WTC11 (cell line): ENCODE measurements at regions of chr10 and their contacts with region 1.

Region 1: GRCh38 chr10:48656241-48656913 is 28.3 kb upstream of the WDFY4 start:
- DNase-seq: peak; percentile 86
- ATAC-seq: peak; percentile 77
- H3K4me3 Mint-ChIP-seq: peak overlapping the region; percentile 66
- H3K27ac Mint-ChIP-seq: no peak overlapping the region
- H3K4me1 Mint-ChIP-seq: peaks cover 16% of the 10 kb centered on the region
- H3K27me3 Mint-ChIP-seq: peaks cover 30% of the 10 kb centered on the region
- CTCF ChIP-seq: peak; percentile 90

Region 2: DNA sequence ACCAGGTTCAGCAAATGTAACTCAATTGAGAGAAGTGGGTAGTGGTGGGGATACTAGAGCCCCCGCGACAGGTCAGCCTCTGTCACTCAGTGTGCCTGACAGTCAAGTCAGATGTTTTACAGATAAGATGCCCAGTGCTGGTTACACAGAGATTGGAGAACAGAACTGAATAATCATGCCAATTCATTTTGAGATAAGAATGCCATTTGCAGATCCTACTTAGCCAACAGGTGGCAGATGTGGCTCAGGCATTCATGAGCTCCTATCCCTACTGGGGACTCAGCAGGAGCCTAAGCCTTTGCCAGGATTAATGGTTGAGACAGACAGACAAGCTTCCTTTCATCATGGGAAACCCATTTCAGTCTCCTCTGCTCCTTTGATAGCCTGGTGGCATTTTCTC is 212.1 kb before region 1 on chr10:
- CTCF ChIA-PET with region 1: interaction called, 45 read pairs
- POLR2A ChIA-PET with region 1: interaction called, 3 read pairs
- DNase-seq: no peak
- ATAC-seq: peak; percentile 65
- H3K4me3 Mint-ChIP-seq: no peak overlapping the region
- H3K27ac Mint-ChIP-seq: peak overlapping the region; percentile 39
- H3K4me1 Mint-ChIP-seq: peaks cover 20% of the 10 kb centered on the region
- H3K27me3 Mint-ChIP-seq: no peaks in the 10 kb centered on the region
- CTCF ChIP-seq: 0 out of 2 replicates have a peak, but pooled peaks have one; percentile 17

Region 3: DNA sequence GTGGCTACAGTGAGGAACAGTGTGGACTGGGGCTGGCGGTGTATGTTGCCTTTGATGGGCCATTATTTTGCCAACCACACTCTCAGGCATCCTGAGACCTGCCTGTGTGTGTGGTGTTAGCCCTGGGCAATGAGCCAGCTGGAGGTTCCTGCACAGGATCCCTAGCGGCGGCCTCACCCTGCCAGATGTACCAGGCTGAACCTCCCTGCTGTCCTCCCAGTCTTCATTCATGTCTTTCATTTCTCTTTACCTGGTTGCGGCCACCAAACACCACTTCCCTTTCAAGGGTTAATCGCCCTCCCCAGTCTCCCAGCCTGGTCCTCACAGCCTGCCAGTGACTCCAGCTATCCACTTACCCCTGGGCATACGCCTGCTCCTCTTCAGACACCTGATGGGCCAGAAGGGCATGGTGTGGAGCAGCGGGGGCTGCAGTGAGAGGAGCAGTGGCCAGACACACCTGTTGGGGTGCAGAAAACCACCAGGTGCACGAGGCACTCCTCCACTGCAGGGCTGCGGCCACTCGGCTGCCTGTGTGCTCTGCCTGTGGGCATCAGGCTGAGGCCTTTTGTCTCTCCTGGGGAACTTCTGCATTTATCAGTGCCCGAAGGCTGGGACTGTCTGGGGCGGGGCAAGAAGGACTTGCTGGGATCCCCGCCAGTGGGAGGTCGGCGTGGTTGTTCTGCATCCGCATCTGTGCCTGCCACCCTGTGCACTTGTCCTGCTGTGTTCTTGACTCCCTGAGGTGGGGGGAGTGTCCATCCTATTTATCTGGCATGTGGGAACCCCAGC is 163.1 kb before region 1 on chr10:
- CTCF ChIA-PET with region 1: no interaction called
- POLR2A ChIA-PET with region 1: no interaction called
- DNase-seq: no peak
- ATAC-seq: no peak
- H3K4me3 Mint-ChIP-seq: no peak overlapping the region
- H3K27ac Mint-ChIP-seq: no peak overlapping the region; the same call in 1 of the 2 replicates
- H3K4me1 Mint-ChIP-seq: peaks cover 13% of the 10 kb centered on the region
- H3K27me3 Mint-ChIP-seq: no peaks in the 10 kb centered on the region
- CTCF ChIP-seq: no peak

Region 4: DNA sequence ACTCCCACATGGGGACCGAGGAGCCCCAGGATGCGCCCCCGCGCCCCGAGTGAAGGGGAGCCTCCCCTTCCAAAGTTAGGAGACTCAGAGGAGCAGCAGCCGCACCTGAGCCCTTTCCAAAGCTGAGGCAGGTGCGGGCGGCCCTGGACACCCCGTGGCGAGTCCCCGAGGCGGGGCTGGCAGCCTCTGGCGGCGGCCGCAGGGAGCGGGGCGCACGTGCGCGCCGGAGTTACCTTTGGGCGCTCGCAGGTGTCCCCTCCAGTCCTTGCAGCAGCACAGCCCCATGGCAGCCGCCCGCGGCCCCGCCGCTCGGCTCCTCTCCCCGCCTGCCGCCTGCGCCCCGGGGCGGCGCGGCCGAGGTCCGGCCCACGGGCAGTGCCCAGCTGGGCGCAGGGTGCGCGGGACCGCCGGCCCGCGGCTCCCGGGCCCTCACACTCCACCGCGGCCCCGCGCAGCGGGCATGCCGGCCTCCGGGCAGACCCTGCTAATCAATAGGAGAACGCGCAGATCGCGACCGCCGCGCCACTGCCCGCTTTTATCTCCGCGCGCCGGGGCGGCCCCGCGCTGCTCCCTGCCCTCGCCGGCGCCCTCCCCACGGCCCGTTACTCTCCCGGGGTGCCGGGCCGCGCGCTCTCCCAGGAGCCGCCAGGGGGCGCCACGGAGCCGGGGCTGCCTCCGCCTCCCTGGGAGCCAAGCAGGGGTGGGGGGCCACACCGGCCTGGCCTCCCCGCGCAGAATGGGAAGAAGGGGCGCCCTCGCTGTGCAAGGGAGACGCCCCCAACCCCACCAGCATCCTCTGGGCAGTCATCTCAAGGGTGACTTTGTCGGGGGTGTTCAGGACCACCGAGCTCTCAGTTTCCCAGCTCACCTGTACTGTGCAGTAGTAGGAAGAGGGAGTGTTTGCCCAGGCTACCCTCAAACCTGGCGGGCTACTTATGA is 132.3 kb before region 1 on chr10:
- CTCF ChIA-PET with region 1: interaction called, 31 read pairs
- POLR2A ChIA-PET with region 1: interaction called, 4 read pairs
- DNase-seq: peak; percentile 73
- ATAC-seq: peak; percentile 61
- H3K4me3 Mint-ChIP-seq: peak overlapping the region; percentile 56
- H3K27ac Mint-ChIP-seq: no peak overlapping the region
- H3K4me1 Mint-ChIP-seq: peaks cover 37% of the 10 kb centered on the region
- H3K27me3 Mint-ChIP-seq: peaks cover 11% of the 10 kb centered on the region
- CTCF ChIP-seq: peak; percentile 90

Region 5: DNA sequence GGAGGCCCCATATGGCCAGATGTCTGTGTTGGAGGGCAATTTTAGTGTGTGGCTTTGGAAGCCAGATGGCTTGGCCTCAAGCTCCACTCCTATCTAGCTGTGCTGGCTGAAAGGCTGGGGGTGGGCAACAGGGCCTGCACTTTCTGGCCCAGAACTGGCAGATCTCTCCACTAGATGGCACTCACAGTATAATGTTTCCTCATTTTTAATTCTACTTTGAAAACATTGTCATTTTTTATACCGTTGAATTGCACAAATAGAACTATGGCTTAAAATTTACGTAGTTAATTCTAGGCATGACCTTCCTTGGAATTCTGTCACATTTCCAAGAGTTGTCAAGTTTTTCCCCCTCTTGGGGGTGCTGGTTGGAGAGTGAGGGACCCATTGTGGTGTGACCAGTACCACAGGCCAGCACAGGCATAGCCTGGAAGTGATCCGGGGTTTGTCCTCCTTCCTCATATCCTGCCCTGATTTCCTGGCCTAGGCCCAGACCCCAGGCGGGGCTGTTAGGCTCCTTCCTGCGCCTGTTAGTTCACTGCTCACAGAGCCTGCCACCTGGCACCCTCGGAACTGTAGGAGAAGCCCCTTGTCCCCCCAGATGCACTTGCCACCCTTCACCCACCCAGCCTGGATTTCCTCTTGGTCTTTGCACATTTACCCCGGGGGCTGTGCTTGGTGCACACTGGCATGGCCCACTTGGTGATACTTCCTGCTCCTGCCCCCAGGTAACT is 104.4 kb before region 1 on chr10:
- CTCF ChIA-PET with region 1: interaction called, 268 read pairs
- POLR2A ChIA-PET with region 1: no interaction called
- DNase-seq: peak; percentile 43
- ATAC-seq: peak; percentile 76
- H3K4me3 Mint-ChIP-seq: no peak overlapping the region
- H3K27ac Mint-ChIP-seq: no peak overlapping the region
- H3K4me1 Mint-ChIP-seq: peaks cover 2% of the 10 kb centered on the region; the same call in 1 of the 2 replicates
- H3K27me3 Mint-ChIP-seq: no peaks in the 10 kb centered on the region
- CTCF ChIP-seq: no peak

Region 6: DNA sequence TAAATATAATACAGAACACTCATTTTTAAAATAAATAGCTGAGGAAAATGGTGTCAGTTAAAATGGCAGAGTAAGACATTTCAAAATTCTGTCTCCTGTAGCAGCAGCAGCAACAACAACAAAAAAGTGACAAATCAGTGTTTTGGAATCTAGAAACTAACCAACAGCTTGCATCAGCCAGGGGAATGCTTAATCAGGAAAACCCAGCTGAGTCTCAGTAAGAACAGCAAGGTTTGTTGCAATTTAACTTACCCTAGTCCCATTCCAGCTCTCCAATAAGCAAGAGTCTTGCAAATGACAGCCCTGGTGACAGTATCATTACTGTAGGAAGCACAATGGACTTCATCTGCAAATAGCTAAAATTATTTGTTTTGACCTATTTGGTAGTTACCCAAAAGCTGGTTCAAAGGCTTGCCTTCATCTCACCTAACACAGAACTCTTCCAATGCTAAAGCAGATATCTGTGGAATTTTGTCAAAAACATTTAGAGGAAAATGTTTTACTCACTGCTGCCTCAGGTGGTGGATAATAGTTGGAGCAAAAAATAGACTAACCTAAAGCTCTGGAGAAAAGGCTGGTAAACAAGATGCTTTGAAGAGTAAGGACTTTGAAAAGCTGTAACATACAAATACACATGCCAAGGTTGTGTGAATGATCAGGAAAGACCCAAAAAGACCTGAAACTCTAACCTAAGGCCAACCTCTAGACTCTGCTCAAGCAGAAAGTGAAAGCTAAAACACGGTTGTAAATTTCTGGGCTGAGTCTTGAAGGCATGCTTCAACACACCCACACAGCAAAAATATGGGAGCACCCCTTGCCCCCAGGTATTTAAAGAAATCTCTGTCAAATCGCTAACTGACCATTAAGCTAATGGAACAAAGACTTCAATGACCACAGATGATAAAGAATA is 41.6 kb before region 1 on chr10:
- CTCF ChIA-PET with region 1: interaction called, 38 read pairs
- POLR2A ChIA-PET with region 1: no interaction called
- DNase-seq: no peak
- ATAC-seq: peak; percentile 65
- H3K4me3 Mint-ChIP-seq: no peak overlapping the region
- H3K27ac Mint-ChIP-seq: no peak overlapping the region
- H3K4me1 Mint-ChIP-seq: no peaks in the 10 kb centered on the region
- H3K27me3 Mint-ChIP-seq: peaks cover 6% of the 10 kb centered on the region
- CTCF ChIP-seq: no peak

Region 7: DNA sequence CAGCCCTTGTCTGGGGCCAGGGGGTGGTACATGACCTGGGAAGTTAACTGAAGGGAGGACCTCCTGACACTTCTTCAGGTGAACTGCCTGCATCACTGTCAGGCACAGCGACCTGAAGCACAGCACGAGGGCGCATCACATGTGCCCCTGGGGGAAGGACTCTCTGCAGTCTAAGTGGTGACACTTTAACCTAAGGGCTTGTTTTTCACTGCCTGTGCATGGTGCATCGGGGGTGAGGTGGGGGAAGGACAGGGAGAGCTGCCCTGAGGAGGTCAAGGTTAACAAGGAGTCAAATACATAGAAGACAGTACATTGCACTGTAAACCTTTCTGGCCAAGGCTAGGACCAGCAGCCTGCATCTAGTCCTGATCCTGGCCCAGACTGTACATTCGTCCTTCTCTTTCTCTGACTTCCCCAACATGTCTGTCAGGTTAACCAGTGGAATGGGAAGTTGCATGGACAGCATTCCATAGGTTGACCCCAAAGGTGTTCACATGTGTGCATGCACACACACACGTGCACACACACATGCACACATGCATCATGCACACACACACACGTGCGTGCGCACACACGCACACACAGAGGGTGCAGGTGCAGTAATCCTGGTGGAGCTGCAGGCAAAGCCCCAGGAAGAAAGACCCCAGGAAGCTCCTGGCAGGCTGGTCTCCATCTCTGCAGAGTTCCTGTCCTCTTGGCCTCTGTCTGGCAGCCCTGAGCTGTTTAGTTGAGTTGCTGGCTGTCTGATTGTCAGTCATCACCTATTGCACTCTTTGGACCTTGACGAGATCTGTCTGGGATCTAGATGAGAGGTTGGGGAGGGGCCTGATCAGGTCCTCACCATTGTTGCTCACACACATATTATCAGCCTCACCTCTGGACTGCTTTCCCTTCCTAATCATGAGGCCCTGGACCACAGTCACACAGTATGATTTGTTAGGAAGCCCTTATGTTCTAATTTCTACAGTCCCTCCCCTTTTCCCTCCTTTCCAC is 66.1 kb after region 1 on chr10:
- CTCF ChIA-PET with region 1: no interaction called
- POLR2A ChIA-PET with region 1: no interaction called
- DNase-seq: no peak
- ATAC-seq: no peak
- H3K4me3 Mint-ChIP-seq: no peak overlapping the region
- H3K27ac Mint-ChIP-seq: no peak overlapping the region
- H3K4me1 Mint-ChIP-seq: no peaks in the 10 kb centered on the region
- H3K27me3 Mint-ChIP-seq: no peaks in the 10 kb centered on the region
- CTCF ChIP-seq: no peak

Region 8: GRCh38 chr10:48976196-48976595 is 319.8 kb after region 1 on chr10:
- CTCF ChIA-PET with region 1: interaction called, 11 read pairs
- POLR2A ChIA-PET with region 1: no interaction called
- DNase-seq: peak; percentile 30
- ATAC-seq: peak; percentile 77
- H3K4me3 Mint-ChIP-seq: no peak overlapping the region
- H3K27ac Mint-ChIP-seq: no peak overlapping the region
- H3K4me1 Mint-ChIP-seq: no peaks in the 10 kb centered on the region
- H3K27me3 Mint-ChIP-seq: no peaks in the 10 kb centered on the region; the same call in 1 of the 2 replicates
- CTCF ChIP-seq: no peak